Endothelial cell of umbilical vein (primary cell): ENCODE measurements at regions of chr12 and their contacts with region 1.

Region 1: GRCh38 chr12:59834659-59835474 is 239.0 kb downstream of the SLC16A7 start:
- DNase-seq: no peak
- H3K4me3 ChIP-seq: no peak overlapping the region
- H3K27ac ChIP-seq: no peak overlapping the region
- H3K4me1 ChIP-seq: peaks cover 12% of the 10 kb centered on the region
- H3K27me3 ChIP-seq: no peaks in the 10 kb centered on the region
- CTCF ChIP-seq: peak in 1 of 2 donors; percentile 25
- POLR2A ChIP-seq: no peak

Region 2: GRCh38 chr12:59595883-59596540 is 238.9 kb before region 1 on chr12 and contains the start of gene SLC16A7:
- CTCF ChIA-PET with region 1: no interaction called
- POLR2A ChIA-PET with region 1: no interaction called
- dilution Hi-C with region 1: no loop called
- intact Hi-C with region 1: loop called (anchors 2 kb)
- DNase-seq: peak; percentile 88
- H3K4me3 ChIP-seq: peak within 1 kb of the TSS; percentile 74 to 100 (median 99)
- H3K27ac ChIP-seq: peak within 1 kb of the TSS; percentile 81
- H3K4me1 ChIP-seq: peaks cover 12% of the 10 kb centered on the region
- H3K27me3 ChIP-seq: no peaks in the 10 kb centered on the region
- CTCF ChIP-seq: no peak
- POLR2A ChIP-seq: peak; percentile 51
- total RNA-seq, gene SLC16A7: 8.4 and 8.9 TPM in 2 replicates

Region 3: DNA sequence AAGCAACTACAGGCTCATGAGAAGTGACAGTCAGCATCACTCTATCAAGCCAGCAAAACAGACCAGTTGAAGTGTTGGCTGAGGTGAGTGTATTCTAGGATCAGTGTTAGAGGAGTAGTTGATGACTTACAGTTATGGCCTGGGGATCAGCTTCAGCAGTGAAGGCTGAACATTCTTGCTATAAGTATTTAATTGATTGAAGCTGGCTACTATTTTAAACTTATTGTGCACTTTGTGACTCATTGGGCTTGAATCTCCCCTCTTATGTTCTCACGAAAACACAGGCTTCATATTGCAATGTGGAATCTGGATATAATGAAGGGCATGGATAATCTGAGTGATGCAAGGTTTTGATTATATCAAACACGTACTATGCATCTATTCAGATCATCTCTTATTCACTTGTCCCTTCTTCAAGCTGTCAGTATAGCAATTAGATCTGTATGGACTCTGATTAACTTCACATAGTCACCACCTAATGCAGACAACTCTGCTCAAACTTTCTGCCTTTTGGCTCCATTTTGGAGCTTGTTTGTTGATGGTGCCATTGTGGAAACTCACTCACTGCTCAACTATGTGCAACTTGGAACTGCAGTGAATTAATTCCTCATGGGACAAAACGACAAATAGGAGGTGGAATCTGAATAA is 70.1 kb after region 1 on chr12:
- CTCF ChIA-PET with region 1: no interaction called
- POLR2A ChIA-PET with region 1: no interaction called
- dilution Hi-C with region 1: no loop called
- intact Hi-C with region 1: no loop called
- DNase-seq: no peak
- H3K4me3 ChIP-seq: no peak overlapping the region
- H3K27ac ChIP-seq: no peak overlapping the region
- H3K4me1 ChIP-seq: no peaks in the 10 kb centered on the region
- H3K27me3 ChIP-seq: no peaks in the 10 kb centered on the region
- CTCF ChIP-seq: no peak
- POLR2A ChIP-seq: no peak

Region 4: DNA sequence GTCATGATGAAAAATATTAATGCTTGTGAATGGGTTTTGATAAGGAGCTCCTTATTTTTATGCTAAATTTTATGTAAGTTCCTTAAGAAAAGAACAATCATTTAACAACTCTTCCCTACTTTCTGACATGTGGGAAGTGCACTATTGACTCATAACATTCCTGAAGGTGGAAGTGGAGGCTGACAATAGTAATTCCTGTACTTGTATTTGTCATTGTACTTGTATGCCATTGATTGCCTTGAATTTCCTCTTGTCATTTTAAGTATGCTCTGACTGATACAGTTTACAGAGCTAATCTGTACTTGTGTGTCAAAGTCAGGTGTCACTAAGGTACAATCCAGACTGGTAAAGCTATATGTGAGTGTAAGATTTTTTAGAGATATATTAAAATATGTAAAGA is 201.0 kb after region 1 on chr12:
- CTCF ChIA-PET with region 1: no interaction called
- POLR2A ChIA-PET with region 1: no interaction called
- dilution Hi-C with region 1: no loop called
- intact Hi-C with region 1: loop called (anchors 1 kb)
- DNase-seq: peak; percentile 84
- H3K4me3 ChIP-seq: no peak overlapping the region
- H3K27ac ChIP-seq: peak overlapping the region; percentile 65
- H3K4me1 ChIP-seq: peaks cover 20% of the 10 kb centered on the region
- H3K27me3 ChIP-seq: no peaks in the 10 kb centered on the region
- CTCF ChIP-seq: no peak
- POLR2A ChIP-seq: no peak

Region 5: GRCh38 chr12:60168441-60168840 is 333.6 kb after region 1 on chr12:
- CTCF ChIA-PET with region 1: no interaction called
- POLR2A ChIA-PET with region 1: no interaction called
- dilution Hi-C with region 1: no loop called
- intact Hi-C with region 1: loop called (anchors 5 kb)
- DNase-seq: no peak
- H3K4me3 ChIP-seq: no peak overlapping the region
- H3K27ac ChIP-seq: no peak overlapping the region
- H3K4me1 ChIP-seq: peaks cover 17% of the 10 kb centered on the region
- H3K27me3 ChIP-seq: no peaks in the 10 kb centered on the region
- CTCF ChIP-seq: no peak
- POLR2A ChIP-seq: no peak

Region 6: DNA sequence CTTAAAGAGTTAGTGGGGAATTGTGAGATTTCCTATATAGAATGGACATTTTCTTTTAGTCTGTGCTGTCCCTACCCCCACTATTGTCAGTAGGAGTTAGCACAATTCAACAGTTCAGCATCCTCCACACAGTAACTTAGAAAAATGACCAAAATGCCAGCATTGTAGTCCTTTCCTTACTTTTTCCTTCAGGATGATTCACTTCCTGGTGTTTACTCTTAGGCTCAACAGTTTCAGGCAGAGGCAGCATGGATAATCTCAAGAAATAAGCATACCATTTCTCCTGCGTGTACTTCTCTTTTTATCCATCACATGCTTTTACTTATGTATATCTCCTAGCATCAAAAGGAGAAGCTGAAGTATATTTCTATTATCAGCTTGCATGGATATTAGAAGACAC is 444.4 kb after region 1 on chr12:
- CTCF ChIA-PET with region 1: no interaction called
- POLR2A ChIA-PET with region 1: no interaction called
- dilution Hi-C with region 1: no loop called
- intact Hi-C with region 1: loop called (anchors 1 kb)
- DNase-seq: peak; percentile 88
- H3K4me3 ChIP-seq: peak overlapping the region in 1 of 3 experiments; percentile 15
- H3K27ac ChIP-seq: peak overlapping the region; percentile 63
- H3K4me1 ChIP-seq: peaks cover 17% of the 10 kb centered on the region
- H3K27me3 ChIP-seq: no peaks in the 10 kb centered on the region
- CTCF ChIP-seq: no peak
- POLR2A ChIP-seq: no peak

Region 7: GRCh38 chr12:60494244-60494643 is 659.4 kb after region 1 on chr12:
- CTCF ChIA-PET with region 1: interaction called, 4 read pairs
- POLR2A ChIA-PET with region 1: no interaction called
- dilution Hi-C with region 1: no loop called
- intact Hi-C with region 1: loop called (anchors 2 kb)
- DNase-seq: peak; percentile 66
- H3K4me3 ChIP-seq: no peak overlapping the region
- H3K27ac ChIP-seq: no peak overlapping the region
- H3K4me1 ChIP-seq: peaks cover 2% of the 10 kb centered on the region
- H3K27me3 ChIP-seq: no peaks in the 10 kb centered on the region
- CTCF ChIP-seq: peak; percentile 34 to 54
- POLR2A ChIP-seq: no peak